Gastrocnemius medialis (tissue), 4 donors: ENCODE measurements at regions of chr9 and their contacts with region 1.

Region 1: GRCh38 chr9:103902263-103902662 is 191.8 kb upstream of the SMC2 start:
- DNase-seq: no peak
- ATAC-seq: no peak
- H3K4me3 ChIP-seq: no peak overlapping the region
- H3K27ac ChIP-seq: no peak overlapping the region
- H3K4me1 ChIP-seq: no peaks in the 10 kb centered on the region
- H3K27me3 ChIP-seq: no peaks in the 10 kb centered on the region
- CTCF ChIP-seq: no peak
- POLR2A ChIP-seq: no peak

Region 2: DNA sequence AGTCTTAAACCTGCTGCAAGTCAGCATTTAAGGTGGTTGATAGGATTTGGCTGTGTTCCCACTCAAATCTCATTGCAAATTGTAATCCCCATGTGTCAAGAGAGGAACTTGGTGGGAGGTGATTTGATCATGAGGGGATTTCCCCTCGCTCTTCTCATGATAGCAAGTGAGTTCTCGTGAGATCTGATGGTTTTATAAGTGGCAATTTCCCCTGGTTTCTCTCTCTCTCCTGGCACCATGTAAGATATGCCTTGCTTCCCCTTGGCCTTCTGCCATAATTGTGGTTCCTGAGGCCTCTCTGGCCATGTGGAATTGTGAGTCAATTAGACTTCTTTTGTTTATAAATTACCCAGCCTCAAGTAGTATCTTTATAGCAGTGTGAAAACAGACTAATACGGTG is 107.6 kb after region 1 on chr9:
- in situ Hi-C with region 1: loop called in 1 of 4 experiments (anchors 25 kb)
- intact Hi-C with region 1: no loop called
- DNase-seq: no peak
- ATAC-seq: no peak
- H3K4me3 ChIP-seq: no peak overlapping the region
- H3K27ac ChIP-seq: no peak overlapping the region
- H3K4me1 ChIP-seq: no peaks in the 10 kb centered on the region
- H3K27me3 ChIP-seq: no peaks in the 10 kb centered on the region
- CTCF ChIP-seq: no peak
- POLR2A ChIP-seq: no peak

Region 3: DNA sequence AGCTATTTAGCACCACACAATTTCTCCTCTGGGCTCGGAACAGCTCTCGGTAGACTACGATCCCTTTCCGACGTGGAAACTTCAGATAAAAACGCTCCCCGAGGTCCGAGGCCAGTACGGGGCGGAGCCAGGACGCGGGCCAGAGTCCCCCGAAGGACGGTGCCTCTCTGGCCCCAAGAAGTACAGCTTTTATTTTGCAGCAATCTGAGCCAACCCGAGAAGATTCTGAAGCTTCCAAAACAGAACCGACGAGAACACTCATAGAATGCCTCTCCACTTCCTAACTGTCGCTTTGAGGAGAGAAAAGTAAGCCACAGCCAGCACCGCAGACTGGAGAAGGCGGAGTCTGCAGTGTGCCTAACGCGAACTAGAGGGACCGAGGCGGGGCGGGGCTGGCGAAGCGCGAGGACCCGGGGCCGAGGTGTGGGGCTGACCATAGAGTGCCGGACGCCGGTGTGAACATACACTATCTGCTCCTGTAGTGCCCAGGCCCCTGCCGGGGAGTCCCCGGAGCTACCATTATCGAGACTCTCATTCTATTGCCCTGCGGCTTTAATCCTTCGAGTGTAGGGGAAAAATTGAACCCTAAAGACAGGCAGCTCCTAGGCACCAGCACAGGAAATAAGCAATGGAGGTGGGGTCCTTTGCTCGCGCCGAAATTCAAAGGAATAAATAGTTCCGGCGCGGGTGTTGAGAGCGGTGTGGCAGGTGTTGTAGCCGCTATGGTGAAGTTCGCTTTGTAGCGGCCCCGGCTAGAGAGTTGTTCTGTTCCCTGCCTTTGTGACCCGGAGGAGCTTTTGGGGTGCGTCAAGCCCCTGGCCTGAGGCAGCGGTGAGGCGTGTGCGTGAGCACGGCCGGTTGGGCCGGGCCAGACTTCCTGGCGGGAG is 191.6 kb after region 1 on chr9 and contains the start of gene SMC2:
- in situ Hi-C with region 1: no loop called
- intact Hi-C with region 1: no loop called
- DNase-seq: peak; percentile 79 to 85
- ATAC-seq: peak; percentile 95 to 96
- H3K4me3 ChIP-seq: peak within 1 kb of the TSS; percentile 80 to 87 (median 84)
- H3K27ac ChIP-seq: peak within 1 kb of the TSS; percentile 87 to 98 (median 92)
- H3K4me1 ChIP-seq: peaks cover 28% of the 10 kb centered on the region in 2 donors
- H3K27me3 ChIP-seq: no peaks in the 10 kb centered on the region
- CTCF ChIP-seq: no peak
- POLR2A ChIP-seq: peak; percentile 48 to 67
- total RNA-seq, gene SMC2: 2.5 to 6.2 (median 4.6) TPM